Activated T-helper 2 cell treated with anti-CD3 and anti-CD28 coated beads, Interferon-gamma antibody, Interleukin-2, Interleukin-4, amounts not matched to agents 10 μg/mL and 5 μg/mL and 100 μg/mL, durations not matched to agents 14 hours and 24 hours and 36 hours (primary cell): ENCODE measurements at regions of chr17 and their contacts with region 1.

Region 1: GRCh38 chr17:75855310-75856081 is at the start of gene WBP2:
- DNase-seq: peak; percentile 98
- H3K4me3 Mint-ChIP-seq: no peak within 1 kb of the TSS
- H3K27ac Mint-ChIP-seq: peak within 1 kb of the TSS; percentile 84
- H3K4me1 Mint-ChIP-seq: peaks cover 26% of the 10 kb centered on the region
- H3K27me3 Mint-ChIP-seq: no peaks in the 10 kb centered on the region
- total RNA-seq, gene WBP2: 79.3 and 80.7 TPM in 2 replicates

Region 2: DNA sequence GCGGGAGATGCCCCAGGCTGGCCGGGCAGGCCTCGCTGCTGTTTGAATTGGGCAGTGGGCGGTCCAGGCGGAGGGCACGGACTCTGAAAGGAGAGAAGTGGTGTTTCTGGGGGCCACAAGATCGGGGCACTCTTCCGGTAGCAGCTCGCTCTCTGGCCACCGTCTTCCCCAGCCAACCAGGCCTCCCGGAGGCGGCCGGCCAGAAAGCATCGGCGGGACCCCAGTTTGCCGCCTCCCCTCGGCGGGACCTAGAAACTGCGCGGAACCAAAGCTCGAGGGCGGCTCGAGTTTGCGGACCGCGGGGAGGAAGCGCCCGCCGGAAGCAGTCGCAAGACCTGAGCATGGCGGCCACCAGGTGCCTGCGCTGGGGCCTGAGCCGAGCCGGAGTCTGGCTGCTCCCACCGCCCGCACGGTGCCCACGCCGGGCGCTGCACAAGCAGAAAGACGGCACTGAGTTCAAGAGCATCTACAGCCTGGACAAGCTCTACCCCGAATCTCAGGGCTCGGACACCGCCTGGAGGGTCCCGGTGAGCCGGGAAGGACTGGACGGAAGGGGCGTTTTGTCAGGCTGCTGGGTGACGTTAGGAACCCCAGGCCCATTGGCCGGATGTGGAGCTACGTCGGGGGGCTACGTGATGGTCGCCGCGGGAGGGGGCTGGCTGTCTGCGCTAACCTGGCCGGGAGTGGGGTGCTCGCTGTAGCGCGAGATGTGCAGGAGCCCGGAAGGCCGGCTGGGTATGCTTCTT is 843.0 kb before region 1 on chr17 and contains the start of gene MRPL58:
- intact Hi-C with region 1: no loop called
- DNase-seq: peak; percentile 79
- H3K4me3 Mint-ChIP-seq: peak within 1 kb of the TSS; percentile 95
- H3K27ac Mint-ChIP-seq: peak within 1 kb of the TSS; percentile 86
- H3K4me1 Mint-ChIP-seq: peaks cover 22% of the 10 kb centered on the region
- H3K27me3 Mint-ChIP-seq: no peaks in the 10 kb centered on the region
- total RNA-seq, gene MRPL58: 65.4 and 68.1 TPM in 2 replicates

Region 3: DNA sequence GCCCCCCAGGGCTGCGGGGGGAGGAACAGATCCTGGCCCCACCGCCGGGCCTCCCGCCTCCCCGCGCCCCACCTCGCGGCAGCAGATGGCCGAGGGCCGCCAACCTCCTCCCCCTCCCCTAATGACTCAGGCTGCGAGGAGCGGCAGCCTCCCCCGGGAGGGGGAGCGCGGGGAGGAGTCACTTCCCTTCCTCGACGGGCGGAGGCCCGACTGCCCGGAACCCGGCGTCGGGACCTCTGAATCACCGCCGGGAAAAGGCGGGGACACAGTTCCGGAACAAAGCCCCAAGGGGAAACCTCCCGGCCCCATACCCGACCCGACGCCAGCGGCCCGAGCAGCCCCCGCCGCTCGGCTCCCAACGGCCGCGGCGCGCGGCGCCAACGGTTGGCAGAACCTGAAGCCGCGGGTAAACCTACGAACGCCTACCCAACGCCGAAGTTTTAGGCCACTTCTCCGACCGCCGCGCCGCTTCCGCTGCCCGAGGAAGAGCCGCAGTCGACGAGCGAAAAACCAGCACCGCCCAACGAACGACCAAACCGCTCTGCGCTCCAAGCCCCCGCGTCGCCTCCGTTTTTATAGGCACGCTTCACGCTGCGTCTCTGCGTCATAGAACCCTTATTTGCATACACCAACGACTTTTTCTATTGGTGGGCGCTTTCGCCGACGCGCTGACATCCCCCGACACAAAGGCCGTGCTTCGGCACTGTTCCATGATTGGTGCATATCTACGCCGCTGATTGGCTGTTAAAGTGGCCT is 76.1 kb before region 1 on chr17:
- intact Hi-C with region 1: loop called (anchors 1 kb)
- DNase-seq: peak; percentile 96
- H3K4me3 Mint-ChIP-seq: peak overlapping the region; percentile 97
- H3K27ac Mint-ChIP-seq: peak overlapping the region; percentile 98
- H3K4me1 Mint-ChIP-seq: peaks cover 37% of the 10 kb centered on the region
- H3K27me3 Mint-ChIP-seq: no peaks in the 10 kb centered on the region

Region 4: GRCh38 chr17:75784473-75785015 is 71.0 kb before region 1 on chr17 and contains the start of gene UNK:
- intact Hi-C with region 1: loop called (anchors 1 kb)
- DNase-seq: peak; percentile 96
- H3K4me3 Mint-ChIP-seq: peak within 1 kb of the TSS; percentile 88
- H3K27ac Mint-ChIP-seq: peak within 1 kb of the TSS; percentile 100
- H3K4me1 Mint-ChIP-seq: peaks cover 38% of the 10 kb centered on the region
- H3K27me3 Mint-ChIP-seq: no peaks in the 10 kb centered on the region
- total RNA-seq, gene UNK: 26.8 and 30.1 TPM in 2 replicates

Region 5: DNA sequence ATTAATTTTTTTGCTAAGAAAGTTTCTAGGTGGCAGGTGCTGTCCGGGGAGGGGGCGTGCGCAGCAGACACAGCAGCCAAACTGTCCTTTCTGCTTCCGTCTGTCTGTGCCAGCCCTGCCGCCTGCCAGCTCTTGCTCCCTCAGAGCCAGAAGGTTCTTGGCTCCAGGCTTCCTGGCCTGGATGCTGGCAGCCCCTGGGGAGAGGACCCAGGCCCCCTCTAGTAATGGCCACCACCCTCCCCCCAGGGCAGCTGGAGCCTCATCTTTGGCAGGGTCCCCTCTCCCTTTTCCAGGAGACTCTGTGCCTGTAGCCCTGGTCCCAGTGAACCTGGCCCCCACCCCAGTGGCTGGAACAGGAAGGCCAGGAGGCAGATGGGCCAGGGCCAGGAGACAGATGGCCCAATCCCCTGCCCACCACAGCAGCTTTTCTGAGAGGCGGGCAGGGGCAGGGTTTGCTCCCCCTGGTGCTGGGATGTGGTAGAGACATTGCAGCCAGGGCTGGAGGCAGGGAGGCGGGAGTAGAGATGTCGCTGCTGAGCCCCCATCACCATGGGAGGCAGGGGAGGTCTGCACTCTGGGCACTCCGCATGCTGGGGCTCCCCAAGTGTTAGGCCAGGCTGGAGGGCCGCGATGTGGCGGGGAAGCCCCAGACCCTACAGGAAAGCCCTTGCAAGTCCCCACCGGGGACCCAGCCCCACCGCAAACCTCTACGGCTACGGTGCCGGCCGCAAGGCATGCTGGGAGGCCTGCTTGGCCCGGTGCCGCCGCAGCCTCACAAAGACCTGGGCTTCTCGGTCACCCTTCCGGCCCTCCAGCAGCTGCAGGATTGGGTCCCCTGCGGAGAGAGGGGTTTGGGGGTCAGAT is 28.0 kb before region 1 on chr17:
- intact Hi-C with region 1: loop called (anchors 2 kb)
- DNase-seq: peak; percentile 56
- H3K4me3 Mint-ChIP-seq: peak overlapping the region; percentile 5
- H3K27ac Mint-ChIP-seq: peak overlapping the region; percentile 83
- H3K4me1 Mint-ChIP-seq: peaks cover 7% of the 10 kb centered on the region
- H3K27me3 Mint-ChIP-seq: no peaks in the 10 kb centered on the region

Region 6: DNA sequence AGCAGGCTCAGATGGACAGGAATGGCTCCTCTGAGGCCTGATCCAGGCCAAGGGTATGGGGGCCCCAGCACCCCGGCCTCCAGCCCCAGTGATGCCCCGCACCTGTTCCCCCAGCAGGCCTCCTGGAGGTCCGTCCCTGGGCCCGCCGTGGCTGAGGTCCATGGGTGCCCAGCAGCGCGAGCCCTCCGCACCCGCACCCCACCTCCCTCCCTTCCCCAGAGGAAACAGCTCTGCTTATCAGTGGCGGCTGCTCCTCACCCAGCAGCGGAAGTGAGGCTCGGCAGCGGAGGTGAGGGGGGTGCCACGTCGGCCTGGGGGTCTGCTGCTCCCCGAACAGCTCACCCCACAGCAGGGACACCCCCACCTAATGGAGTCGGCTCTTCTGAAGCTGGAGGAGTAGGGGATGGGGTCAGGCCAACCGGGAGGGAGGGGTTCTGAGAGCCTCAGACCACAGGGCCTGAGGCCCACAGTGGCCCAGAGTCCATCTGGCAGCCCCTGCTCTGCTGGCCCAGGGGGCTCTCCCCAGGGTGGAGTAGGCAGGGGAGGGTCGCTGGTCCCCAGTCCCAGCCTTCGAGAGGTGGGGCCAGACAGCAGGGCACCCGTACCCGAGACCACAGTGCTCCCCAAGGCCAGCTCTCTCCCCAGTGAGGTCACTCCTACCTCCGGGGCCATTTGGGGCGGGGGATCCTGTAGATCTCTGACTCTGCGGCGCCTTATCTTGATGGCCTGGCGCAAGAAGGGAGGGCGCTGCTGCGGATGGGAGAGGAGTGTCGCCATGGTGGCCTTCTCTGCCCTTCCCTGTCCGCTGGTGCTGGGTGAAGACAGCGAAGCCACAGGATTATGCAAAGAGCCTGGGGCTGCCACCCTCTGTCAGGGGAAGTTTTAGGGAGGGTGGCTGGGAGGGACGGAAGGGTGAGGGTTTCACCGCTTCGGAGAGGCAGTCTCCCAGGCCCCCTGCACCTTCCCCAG is 11.7 kb before region 1 on chr17 and contains the start of gene UNC13D:
- intact Hi-C with region 1: loop called (anchors 1 kb)
- DNase-seq: peak; percentile 60
- H3K4me3 Mint-ChIP-seq: peak within 1 kb of the TSS; percentile 95
- H3K27ac Mint-ChIP-seq: peak within 1 kb of the TSS; percentile 97
- H3K4me1 Mint-ChIP-seq: peaks cover 10% of the 10 kb centered on the region
- H3K27me3 Mint-ChIP-seq: no peaks in the 10 kb centered on the region
- total RNA-seq, gene UNC13D: 165 and 175 TPM in 2 replicates

Region 7: DNA sequence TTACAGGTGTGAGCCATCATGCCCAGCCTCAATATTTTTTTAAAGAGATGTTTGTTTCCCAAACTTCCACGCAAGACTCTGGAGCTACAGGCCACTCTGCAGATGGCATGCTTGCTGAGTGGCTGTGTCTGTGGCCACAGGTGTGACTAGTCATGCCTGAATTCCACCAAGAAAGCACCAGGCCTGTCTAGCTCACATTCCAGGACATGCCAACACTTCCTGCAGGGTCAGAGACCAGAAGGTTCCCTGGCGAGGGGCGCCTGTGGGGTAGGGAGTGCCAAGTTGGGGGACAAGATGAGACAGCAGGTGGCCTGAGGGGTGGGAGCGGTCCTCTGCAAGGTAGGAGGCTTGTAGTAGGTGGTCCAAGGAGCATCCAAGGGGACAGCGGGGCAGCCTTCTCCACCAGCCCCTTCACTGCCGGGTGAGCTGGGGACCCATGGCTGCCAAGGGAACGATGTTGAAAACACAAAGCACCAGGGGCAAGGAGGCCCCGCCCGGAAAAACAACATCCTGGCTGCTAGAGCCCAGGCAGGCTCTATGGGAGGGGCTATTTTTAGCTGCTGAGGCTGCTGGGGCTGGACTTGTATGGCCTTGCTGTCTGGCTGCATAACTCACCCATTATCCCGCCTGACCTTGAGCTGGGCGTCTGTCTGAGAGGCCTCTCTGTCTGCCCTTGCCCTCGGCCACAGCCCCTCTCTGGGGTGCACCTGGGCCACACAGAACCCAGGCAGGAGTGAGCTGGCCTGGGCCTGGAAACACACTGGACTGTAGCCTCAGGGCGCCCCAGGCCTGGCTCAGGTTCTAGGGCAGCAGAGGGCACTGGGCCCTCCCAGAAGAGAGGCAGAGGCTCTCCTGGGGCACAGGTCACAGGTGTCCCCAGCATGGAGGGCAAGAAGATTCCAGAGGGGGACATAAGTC is 17.2 kb after region 1 on chr17:
- intact Hi-C with region 1: loop called (anchors 2 kb)
- DNase-seq: peak; percentile 71
- H3K4me3 Mint-ChIP-seq: no peak overlapping the region
- H3K27ac Mint-ChIP-seq: peak overlapping the region; percentile 71
- H3K4me1 Mint-ChIP-seq: peaks cover 33% of the 10 kb centered on the region
- H3K27me3 Mint-ChIP-seq: no peaks in the 10 kb centered on the region

Region 8: GRCh38 chr17:75904749-75905521 is 49.4 kb after region 1 on chr17 and contains the start of gene MRPL38:
- intact Hi-C with region 1: loop called (anchors 2 kb)
- DNase-seq: peak; percentile 96
- H3K4me3 Mint-ChIP-seq: peak within 1 kb of the TSS; percentile 88
- H3K27ac Mint-ChIP-seq: peak within 1 kb of the TSS; percentile 89
- H3K4me1 Mint-ChIP-seq: peaks cover 5% of the 10 kb centered on the region
- H3K27me3 Mint-ChIP-seq: no peaks in the 10 kb centered on the region
- total RNA-seq, gene MRPL38: 127 and 139 TPM in 2 replicates

Region 9: GRCh38 chr17:76000016-76000754 is 144.7 kb after region 1 on chr17:
- intact Hi-C with region 1: no loop called
- DNase-seq: peak; percentile 52
- H3K4me3 Mint-ChIP-seq: no peak overlapping the region
- H3K27ac Mint-ChIP-seq: no peak overlapping the region
- H3K4me1 Mint-ChIP-seq: peaks cover 15% of the 10 kb centered on the region
- H3K27me3 Mint-ChIP-seq: no peaks in the 10 kb centered on the region

Region 10: GRCh38 chr17:76246080-76247066 is 390.9 kb after region 1 on chr17:
- intact Hi-C with region 1: no loop called
- DNase-seq: peak; percentile 81
- H3K4me3 Mint-ChIP-seq: peak overlapping the region; percentile 64
- H3K27ac Mint-ChIP-seq: peak overlapping the region; percentile 92
- H3K4me1 Mint-ChIP-seq: peaks cover 59% of the 10 kb centered on the region
- H3K27me3 Mint-ChIP-seq: no peaks in the 10 kb centered on the region